Calu3 (cell line): ENCODE measurements at regions of chr11 and their contacts with region 1.

Region 1: GRCh38 chr11:65117216-65118096 is at the start of gene ZNHIT2:
- DNase-seq: peak; percentile 99
- H3K4me3 Mint-ChIP-seq: peak within 1 kb of the TSS; percentile 82
- H3K27ac Mint-ChIP-seq: peak within 1 kb of the TSS; percentile 90
- H3K4me1 Mint-ChIP-seq: peaks cover 31% of the 10 kb centered on the region
- H3K27me3 Mint-ChIP-seq: no peaks in the 10 kb centered on the region
- CTCF ChIP-seq: peak; percentile 88
- total RNA-seq, gene ZNHIT2: 13.2 and 17.2 TPM in 2 replicates

Region 2: DNA sequence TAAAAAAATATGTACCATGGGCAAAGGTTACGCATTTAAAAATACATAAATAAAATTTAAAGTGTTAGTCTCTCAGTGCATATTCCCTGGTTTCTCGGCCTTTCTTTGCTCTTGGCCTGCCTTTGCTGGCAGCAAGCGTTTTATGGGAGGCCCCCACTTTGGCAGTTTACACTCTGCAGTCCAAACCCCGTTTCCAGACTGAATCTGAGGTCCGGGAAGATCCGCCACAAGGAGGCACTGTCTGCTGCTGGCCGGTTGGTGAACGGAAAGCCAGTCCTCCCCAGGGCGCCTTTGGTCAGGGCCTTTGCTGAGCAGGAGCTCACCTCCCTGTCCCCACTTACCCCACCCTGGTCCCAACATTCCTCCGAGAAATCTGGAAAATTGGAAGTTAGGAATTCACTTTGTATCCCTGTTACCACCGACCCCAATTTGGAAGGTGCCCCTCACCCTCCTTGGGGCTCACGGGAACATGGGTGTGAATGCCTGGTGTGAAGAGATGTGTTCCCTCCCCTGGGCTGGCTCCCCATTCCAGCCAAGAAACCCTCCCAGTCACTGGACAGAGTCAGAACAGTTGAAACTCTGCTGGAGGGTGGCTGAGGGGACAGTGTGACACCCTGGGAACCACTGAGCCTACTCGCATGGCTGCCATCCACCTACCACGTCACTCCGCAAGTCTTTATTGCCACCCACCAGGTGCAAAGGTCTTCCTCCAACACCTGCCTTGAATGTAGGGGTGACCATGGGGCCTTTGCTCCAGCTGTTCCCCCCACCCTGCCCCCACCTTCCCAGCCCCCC is 329.7 kb before region 1 on chr11:
- CTCF ChIA-PET with region 1: no interaction called
- intact Hi-C with region 1: loop called (anchors 5 kb)
- DNase-seq: peak; percentile 78
- H3K4me3 Mint-ChIP-seq: no peak overlapping the region
- H3K27ac Mint-ChIP-seq: no peak overlapping the region
- H3K4me1 Mint-ChIP-seq: no peaks in the 10 kb centered on the region
- H3K27me3 Mint-ChIP-seq: no peaks in the 10 kb centered on the region
- CTCF ChIP-seq: peak; percentile 74

Region 3: GRCh38 chr11:65134386-65135253 is 17.2 kb after region 1 on chr11 and contains the start of gene SYVN1:
- CTCF ChIA-PET with region 1: interaction called, 14 read pairs
- intact Hi-C with region 1: no loop called
- DNase-seq: peak; percentile 92
- H3K4me3 Mint-ChIP-seq: peak within 1 kb of the TSS; percentile 99
- H3K27ac Mint-ChIP-seq: peak within 1 kb of the TSS; percentile 100
- H3K4me1 Mint-ChIP-seq: peaks cover 28% of the 10 kb centered on the region
- H3K27me3 Mint-ChIP-seq: no peaks in the 10 kb centered on the region
- CTCF ChIP-seq: no peak
- total RNA-seq, gene SYVN1: 68.5 and 76.7 TPM in 2 replicates